ENCODE measurements at regions of chr11 and their contacts with region 1.

Region 1: DNA sequence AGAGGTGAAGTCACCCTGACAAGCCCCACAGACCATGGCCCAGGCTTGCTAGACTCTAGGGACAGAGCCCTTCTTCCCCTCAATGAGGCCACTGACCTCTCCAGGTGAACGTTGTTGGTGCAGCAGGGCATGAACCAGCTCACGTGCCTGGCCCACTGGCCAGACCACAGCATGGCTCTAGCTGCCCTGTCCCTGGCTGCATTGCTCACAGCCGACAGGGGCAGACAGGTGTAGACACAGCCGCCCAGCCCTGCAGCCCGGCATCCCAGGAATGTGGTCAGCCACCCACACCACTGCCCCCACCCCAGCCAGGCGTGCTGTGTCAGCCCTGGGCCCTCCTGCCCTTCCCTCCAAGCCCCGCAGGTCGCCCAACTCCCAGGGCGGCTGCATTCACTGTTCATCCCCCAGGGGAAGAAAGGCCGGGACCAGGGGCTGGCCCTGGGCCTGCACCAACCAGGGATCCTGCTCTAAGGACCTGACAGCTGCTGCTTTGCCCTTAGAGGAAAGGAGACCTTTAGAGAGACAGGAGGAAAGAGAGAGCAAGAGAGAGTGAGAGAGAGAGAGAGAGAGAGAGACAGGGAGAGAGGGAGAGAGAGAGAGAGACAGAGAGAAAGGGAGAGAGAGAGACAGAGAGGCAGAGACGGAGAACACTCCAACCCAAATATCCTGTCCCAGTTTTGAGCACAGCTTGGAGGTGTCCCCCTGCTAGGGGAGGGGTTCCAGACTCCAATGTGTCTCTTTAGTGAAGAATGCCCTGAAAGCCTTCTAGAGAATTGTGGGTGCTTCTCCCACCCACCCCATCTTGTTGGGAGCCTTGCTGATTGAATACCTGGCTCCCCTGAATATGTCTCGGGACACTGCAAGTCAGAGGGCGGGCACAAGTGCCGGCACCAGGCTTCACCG is 44.2 kb upstream of the LINC01488 start:
- DNase-seq: no peak
- ATAC-seq: peak; percentile 78
- H3K4me3 ChIP-seq: no peak overlapping the region
- H3K27ac ChIP-seq: peak overlapping the region; percentile 67
- H3K4me1 ChIP-seq: peaks cover 14% of the 10 kb centered on the region
- H3K27me3 ChIP-seq: no peaks in the 10 kb centered on the region
- CTCF ChIP-seq: no peak

Region 2: DNA sequence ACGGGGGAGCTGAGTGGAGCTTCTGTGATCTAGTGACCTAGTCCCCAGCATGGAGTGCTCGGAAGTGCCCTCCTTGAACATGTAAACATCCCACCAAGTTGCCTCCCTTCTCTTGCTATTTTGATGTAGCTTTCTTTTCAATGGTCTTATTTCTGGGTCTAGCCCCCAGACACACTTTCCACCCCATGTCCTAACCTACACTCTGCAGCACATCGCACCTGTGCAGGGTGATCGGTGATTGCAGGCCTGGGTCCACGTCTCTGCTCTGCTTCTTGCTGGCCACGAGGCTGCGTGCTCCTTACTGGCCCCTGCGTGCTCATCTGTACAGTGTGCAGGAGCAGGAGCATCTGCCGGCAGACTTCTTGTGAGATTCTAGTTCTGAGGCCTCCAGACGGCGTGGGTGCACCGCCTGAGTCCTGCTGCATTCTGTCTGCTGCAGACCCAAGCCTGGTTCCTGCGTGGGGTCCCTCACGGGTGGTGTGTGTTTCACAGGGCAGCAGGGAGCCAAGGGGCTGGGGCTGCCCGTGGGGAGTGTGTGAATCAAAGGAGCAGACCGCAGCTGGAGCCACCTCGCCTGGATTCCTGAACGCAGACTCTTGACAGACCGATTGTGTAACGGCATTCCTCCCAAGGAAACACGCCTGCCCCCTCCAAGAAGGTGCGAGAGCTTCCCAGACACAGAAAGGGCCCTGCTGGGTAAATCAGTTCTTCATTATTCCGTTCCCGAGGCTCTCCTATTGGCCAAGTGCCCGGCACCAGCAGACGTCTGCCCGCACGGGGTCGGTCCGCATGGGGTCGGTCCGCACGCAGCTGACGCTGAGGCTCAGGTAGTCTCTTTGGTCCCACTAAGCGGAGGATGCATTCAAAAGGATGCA is 187.7 kb before region 1 on chr11:
- CTCF ChIA-PET with region 1: no interaction called
- POLR2A ChIA-PET with region 1: no interaction called
- in situ Hi-C with region 1: no loop called
- intact Hi-C with region 1: no loop called
- DNase-seq: no peak
- ATAC-seq: 0 out of 2 replicates have a peak, but pooled peaks have one; percentile 14
- H3K4me3 ChIP-seq: no peak overlapping the region
- H3K27ac ChIP-seq: no peak overlapping the region
- H3K4me1 ChIP-seq: no peaks in the 10 kb centered on the region
- H3K27me3 ChIP-seq: no peaks in the 10 kb centered on the region
- CTCF ChIP-seq: no peak

Region 3: DNA sequence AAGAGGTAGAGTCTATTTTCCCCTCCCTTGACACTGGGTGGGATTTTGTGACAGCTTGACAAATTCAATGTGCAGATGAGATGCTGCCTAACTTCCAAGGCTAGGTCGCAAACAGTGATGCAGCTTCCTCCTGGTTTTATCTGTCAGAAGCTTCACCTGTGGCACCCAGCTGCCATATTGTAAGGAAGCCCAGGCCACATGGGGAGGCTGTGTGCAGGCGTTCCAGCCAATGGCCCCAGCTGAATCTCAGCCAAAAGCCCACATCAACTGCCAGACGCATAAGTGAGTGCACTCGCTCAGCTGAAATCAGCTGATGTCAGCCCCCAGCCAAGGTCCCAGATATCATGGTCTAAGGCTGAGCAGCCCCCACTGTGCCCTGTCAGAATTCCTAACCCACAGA is 19.5 kb after region 1 on chr11:
- CTCF ChIA-PET with region 1: no interaction called
- POLR2A ChIA-PET with region 1: interaction called, 12 read pairs
- in situ Hi-C with region 1: no loop called
- intact Hi-C with region 1: no loop called
- DNase-seq: no peak
- ATAC-seq: no peak
- H3K4me3 ChIP-seq: no peak overlapping the region
- H3K27ac ChIP-seq: no peak overlapping the region
- H3K4me1 ChIP-seq: no peaks in the 10 kb centered on the region
- H3K27me3 ChIP-seq: no peaks in the 10 kb centered on the region
- CTCF ChIP-seq: no peak